Activated naive CD4-positive, alpha-beta T cell treated with anti-CD3 and anti-CD28 coated beads for 36 hours (primary cell): ENCODE measurements at regions of chr19 and their contacts with region 1.

Region 1: GRCh38 chr19:32674959-32675719 is at the start of gene ANKRD27:
- DNase-seq: peak; percentile 97
- H3K4me3 Mint-ChIP-seq: peak within 1 kb of the TSS; percentile 89
- H3K27ac Mint-ChIP-seq: peak within 1 kb of the TSS; percentile 46
- H3K4me1 Mint-ChIP-seq: peaks cover 22% of the 10 kb centered on the region
- H3K27me3 Mint-ChIP-seq: peaks cover 14% of the 10 kb centered on the region
- total RNA-seq, gene ANKRD27: 28.8 to 29.7 TPM

Region 2: GRCh38 chr19:32345261-32346207 is 329.6 kb before region 1 on chr19 and contains the start of gene ZNF507:
- CTCF ChIA-PET with region 1: no interaction called
- intact Hi-C with region 1: loop called (anchors 1 kb)
- DNase-seq: peak; percentile 90
- H3K4me3 Mint-ChIP-seq: peak within 1 kb of the TSS; percentile 96
- H3K27ac Mint-ChIP-seq: peak within 1 kb of the TSS; percentile 89
- H3K4me1 Mint-ChIP-seq: peaks cover 34% of the 10 kb centered on the region
- H3K27me3 Mint-ChIP-seq: no peaks in the 10 kb centered on the region
- total RNA-seq, gene ZNF507: 21.4 to 21.5 TPM

Region 3: GRCh38 chr19:32405431-32406161 is 269.5 kb before region 1 on chr19 and contains the start of gene DPY19L3:
- CTCF ChIA-PET with region 1: no interaction called
- intact Hi-C with region 1: loop called (anchors 5 kb)
- DNase-seq: peak; percentile 93
- H3K4me3 Mint-ChIP-seq: peak within 1 kb of the TSS; percentile 88
- H3K27ac Mint-ChIP-seq: peak within 1 kb of the TSS; percentile 90
- H3K4me1 Mint-ChIP-seq: peaks cover 19% of the 10 kb centered on the region
- H3K27me3 Mint-ChIP-seq: no peaks in the 10 kb centered on the region
- total RNA-seq, gene DPY19L3: 11.1 to 11.5 TPM

Region 4: GRCh38 chr19:32599736-32600157 is 75.4 kb before region 1 on chr19:
- CTCF ChIA-PET with region 1: no interaction called
- intact Hi-C with region 1: loop called (anchors 5 kb)
- DNase-seq: peak; percentile 62
- H3K4me3 Mint-ChIP-seq: no peak overlapping the region
- H3K27ac Mint-ChIP-seq: no peak overlapping the region
- H3K4me1 Mint-ChIP-seq: peaks cover 7% of the 10 kb centered on the region
- H3K27me3 Mint-ChIP-seq: no peaks in the 10 kb centered on the region

Region 5: DNA sequence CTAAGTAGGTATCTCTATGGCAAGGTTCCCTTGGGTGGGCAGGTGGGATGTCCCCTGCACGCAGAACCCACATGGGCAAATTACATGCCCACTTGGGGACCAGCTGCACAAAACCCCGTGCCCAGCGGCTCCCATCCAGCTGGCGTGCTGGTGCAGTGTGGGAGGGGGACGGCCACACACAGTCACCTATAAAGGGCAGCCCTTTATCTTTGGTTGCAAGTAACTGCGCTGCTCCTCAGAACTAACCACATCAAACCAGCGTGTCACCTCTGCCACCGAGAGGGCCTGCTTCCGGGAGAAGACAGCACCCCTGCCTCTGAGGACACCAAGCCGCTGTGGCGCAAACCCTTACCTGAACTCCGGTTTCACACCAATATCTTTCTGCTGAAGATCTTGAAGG is 32.4 kb before region 1 on chr19:
- CTCF ChIA-PET with region 1: no interaction called
- intact Hi-C with region 1: loop called (anchors 1 kb)
- DNase-seq: peak; percentile 86
- H3K4me3 Mint-ChIP-seq: no peak overlapping the region
- H3K27ac Mint-ChIP-seq: no peak overlapping the region
- H3K4me1 Mint-ChIP-seq: peaks cover 25% of the 10 kb centered on the region
- H3K27me3 Mint-ChIP-seq: no peaks in the 10 kb centered on the region

Region 6: GRCh38 chr19:32881766-32882165 is 206.6 kb after region 1 on chr19:
- CTCF ChIA-PET with region 1: no interaction called
- intact Hi-C with region 1: no loop called
- DNase-seq: no peak
- H3K4me3 Mint-ChIP-seq: no peak overlapping the region
- H3K27ac Mint-ChIP-seq: no peak overlapping the region
- H3K4me1 Mint-ChIP-seq: no peaks in the 10 kb centered on the region
- H3K27me3 Mint-ChIP-seq: no peaks in the 10 kb centered on the region

Region 7: DNA sequence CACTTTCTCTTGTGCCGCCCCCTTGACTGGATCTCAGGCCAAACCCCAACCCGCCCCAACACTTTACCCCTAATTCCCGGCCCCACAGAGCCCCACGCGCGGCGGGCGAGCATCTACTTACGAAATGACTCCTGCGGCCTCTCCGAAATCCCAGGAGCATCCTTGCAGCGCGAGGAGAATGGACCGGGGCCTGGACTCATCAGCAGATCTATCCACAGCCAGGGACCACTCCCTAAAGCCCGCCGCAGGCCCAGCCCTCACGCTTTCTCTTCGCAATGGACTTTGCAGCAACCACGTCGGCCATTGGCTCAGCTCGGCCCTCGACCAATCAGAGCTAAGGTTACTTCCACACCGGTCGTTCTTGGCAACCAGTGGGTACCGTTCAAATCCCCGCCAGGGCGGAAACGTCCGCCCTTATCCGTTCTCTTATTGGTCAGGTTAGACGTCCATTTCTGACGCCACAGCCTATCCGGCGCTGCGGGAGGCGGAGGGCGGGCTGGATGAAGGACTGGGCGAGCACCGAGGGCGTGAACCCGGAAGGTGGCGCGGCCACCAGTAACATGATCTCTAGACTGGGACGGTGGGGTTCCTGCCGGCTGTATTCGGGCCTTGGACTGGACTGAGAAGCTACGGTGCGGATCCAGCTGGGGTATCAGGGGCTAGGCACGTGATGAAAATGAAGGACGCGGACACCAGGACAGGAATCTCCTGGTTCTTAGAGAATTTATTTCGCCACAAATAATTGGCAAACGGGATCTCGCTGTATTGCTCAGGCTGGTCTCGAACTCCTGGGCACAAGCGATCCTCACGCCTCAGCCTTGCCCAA is 296.8 kb after region 1 on chr19 and contains the starts of genes CEP89 and FAAP24:
- CTCF ChIA-PET with region 1: no interaction called
- intact Hi-C with region 1: loop called (anchors 1 kb)
- DNase-seq: peak; percentile 99
- H3K4me3 Mint-ChIP-seq: peak within 1 kb of the TSS; percentile 97
- H3K27ac Mint-ChIP-seq: peak within 1 kb of the TSS; percentile 90
- H3K4me1 Mint-ChIP-seq: peaks cover 9% of the 10 kb centered on the region
- H3K27me3 Mint-ChIP-seq: no peaks in the 10 kb centered on the region
- total RNA-seq, gene CEP89: 14.6 to 15.5 TPM
- total RNA-seq, gene FAAP24: 9.6 to 10.5 TPM